ENCODE measurements at regions of chr12 and their contacts with region 1.

Region 1: GRCh38 chr12:49842519-49843352 is at the start of gene BCDIN3D:
- DNase-seq: peak; percentile 52
- H3K4me3 ChIP-seq: peak within 1 kb of the TSS; percentile 80
- H3K27me3 ChIP-seq: no peaks in the 10 kb centered on the region
- CTCF ChIP-seq: no peak
- polyA plus RNA-seq, gene BCDIN3D: 2.6 and 3.5 TPM in 2 replicates

Region 2: GRCh38 chr12:49763006-49763591 is 79.6 kb before region 1 on chr12:
- CTCF ChIA-PET with region 1: interaction called, 19 read pairs
- POLR2A ChIA-PET with region 1: no interaction called
- DNase-seq: no peak
- H3K4me3 ChIP-seq: no peak overlapping the region
- H3K27me3 ChIP-seq: no peaks in the 10 kb centered on the region
- CTCF ChIP-seq: peak; percentile 86

Region 3: GRCh38 chr12:49783917-49784676 is 58.6 kb before region 1 on chr12:
- CTCF ChIA-PET with region 1: interaction called, 59 read pairs
- POLR2A ChIA-PET with region 1: no interaction called
- DNase-seq: peak; percentile 63
- H3K4me3 ChIP-seq: no peak overlapping the region
- H3K27me3 ChIP-seq: no peaks in the 10 kb centered on the region
- CTCF ChIP-seq: no peak

Region 4: DNA sequence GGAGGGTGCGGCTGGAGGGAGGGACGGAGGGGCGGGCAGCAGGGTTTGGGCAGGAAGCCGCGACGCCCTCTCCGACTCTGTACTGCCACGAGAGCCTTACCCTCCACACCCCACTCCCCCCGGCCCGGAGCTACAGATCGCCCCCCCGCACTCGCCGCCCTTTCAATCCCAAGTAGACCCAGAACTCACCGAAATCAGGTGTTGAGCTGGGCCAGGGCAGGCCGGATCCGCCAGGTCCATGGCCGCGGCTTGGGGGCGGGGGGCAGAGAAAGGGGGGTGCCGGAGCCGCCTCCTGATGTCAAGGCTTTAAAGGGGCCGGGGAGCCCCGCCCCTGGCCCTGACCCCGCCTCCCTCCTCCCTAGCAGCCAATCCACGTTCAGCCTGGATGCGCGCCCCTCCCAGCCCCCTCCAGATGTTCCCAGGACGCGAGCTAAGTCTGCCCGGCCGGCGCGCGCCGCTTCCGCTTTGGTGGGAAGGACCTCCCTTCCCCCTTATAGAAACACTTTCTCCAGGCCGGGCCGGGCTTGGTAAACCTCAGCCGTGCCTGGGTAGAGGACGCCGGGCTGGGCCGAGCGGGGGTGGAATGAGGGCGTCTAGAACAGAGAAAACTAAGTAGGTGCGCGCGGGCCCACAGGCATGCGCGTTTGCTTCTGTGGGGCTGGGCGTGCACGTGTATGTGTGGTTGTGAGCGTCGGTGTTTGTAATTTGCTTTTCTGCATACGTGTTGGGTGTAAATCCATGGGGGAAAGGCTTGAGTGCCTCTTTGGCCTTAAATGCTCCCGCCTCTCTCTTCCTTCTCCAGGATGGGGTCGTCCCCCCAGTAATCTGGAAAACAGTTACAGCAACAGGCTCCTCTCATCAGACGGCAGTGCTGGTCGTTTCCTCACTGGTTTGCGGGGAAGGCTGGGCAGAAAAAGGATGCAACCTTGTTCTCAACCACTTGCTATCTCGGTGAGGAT is 14.3 kb before region 1 on chr12 and contains the start of gene NCKAP5L:
- CTCF ChIA-PET with region 1: interaction called, 16 read pairs
- POLR2A ChIA-PET with region 1: interaction called, 15 read pairs
- DNase-seq: peak; percentile 74
- H3K4me3 ChIP-seq: peak within 1 kb of the TSS; percentile 92
- H3K27me3 ChIP-seq: no peaks in the 10 kb centered on the region
- CTCF ChIP-seq: no peak
- polyA plus RNA-seq, gene NCKAP5L: 7.3 and 13.2 TPM in 2 replicates

Region 5: GRCh38 chr12:49920241-49920921 is 77.6 kb after region 1 on chr12:
- CTCF ChIA-PET with region 1: no interaction called
- POLR2A ChIA-PET with region 1: no interaction called
- DNase-seq: no peak
- H3K4me3 ChIP-seq: no peak overlapping the region
- H3K27me3 ChIP-seq: no peaks in the 10 kb centered on the region; the same call in 1 of the 2 replicates
- CTCF ChIP-seq: no peak